ENCODE measurements at regions of chr4 and their contacts with region 1.

Region 1: DNA sequence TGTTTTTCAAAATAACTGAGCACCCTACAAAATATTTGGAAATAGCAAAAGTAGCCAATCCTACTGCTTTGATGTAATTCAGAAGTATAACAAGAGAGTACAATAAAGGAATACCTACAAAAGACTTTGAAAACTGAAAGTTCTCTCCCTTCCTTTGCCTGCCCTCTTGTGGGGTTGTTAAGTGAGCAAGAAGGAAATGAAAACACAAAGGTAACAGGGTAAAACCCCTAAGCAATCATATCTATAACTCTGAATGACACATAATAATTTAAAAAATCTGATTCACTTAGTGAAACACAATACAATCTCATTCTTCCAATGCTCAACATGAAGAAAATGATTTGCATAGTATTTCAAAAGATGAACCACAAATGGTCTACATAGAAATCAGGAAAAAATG is 98.2 kb downstream of the FRYL start:
- DNase-seq: no peak
- H3K4me3 Mint-ChIP-seq: no peak overlapping the region
- H3K27ac Mint-ChIP-seq: peak overlapping the region; percentile 66
- H3K4me1 Mint-ChIP-seq: peaks cover 36% of the 10 kb centered on the region
- H3K27me3 Mint-ChIP-seq: no peaks in the 10 kb centered on the region

Region 2: DNA sequence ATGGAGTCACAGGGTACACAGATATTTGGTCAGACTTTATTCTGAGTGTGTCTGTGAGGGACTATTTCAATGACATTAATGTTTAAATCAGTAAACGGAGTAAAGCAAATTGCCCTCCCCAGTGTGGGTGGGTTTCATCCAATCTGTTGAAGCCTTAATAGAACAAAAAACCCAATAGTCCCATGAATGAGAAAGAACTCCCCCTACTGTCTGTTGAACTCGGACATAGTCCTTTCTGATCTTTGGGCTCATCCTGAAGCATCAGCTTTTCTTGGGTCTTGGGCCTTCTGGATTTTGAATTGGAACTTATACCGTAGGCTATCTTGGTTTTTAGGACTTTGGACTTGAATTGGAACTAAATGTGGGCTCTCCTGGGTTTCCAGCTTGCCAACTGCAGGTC is 1966.4 kb before region 1 on chr4:
- intact Hi-C with region 1: no loop called
- DNase-seq: no peak
- H3K4me3 Mint-ChIP-seq: no peak overlapping the region
- H3K27ac Mint-ChIP-seq: no peak overlapping the region
- H3K4me1 Mint-ChIP-seq: no peaks in the 10 kb centered on the region
- H3K27me3 Mint-ChIP-seq: no peaks in the 10 kb centered on the region

Region 3: GRCh38 chr4:47891928-47892327 is 789.9 kb before region 1 on chr4:
- intact Hi-C with region 1: no loop called
- DNase-seq: no peak
- H3K4me3 Mint-ChIP-seq: no peak overlapping the region
- H3K27ac Mint-ChIP-seq: peak overlapping the region; percentile 42
- H3K4me1 Mint-ChIP-seq: peaks cover 6% of the 10 kb centered on the region
- H3K27me3 Mint-ChIP-seq: no peaks in the 10 kb centered on the region

Region 4: DNA sequence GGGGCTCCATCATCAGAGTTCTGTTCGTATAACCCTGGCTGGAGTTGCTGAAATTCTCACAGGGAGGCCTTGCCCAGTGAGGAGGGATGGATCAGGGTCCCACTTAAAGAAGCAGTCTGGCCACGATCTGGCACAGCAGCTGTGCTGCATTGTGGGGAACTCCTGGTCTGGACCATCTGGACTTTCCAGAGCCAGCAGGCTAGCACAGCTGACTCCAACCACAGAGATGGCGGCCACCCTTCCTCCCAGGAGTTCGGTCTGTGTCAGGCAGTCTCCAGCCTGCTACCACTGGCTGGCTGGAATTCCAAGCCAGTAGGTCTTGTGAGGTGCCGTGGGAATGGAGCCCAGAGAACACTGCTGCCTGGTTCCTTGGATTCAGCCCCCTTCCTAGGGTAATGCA is 278.5 kb before region 1 on chr4:
- intact Hi-C with region 1: no loop called
- DNase-seq: no peak
- H3K4me3 Mint-ChIP-seq: no peak overlapping the region
- H3K27ac Mint-ChIP-seq: no peak overlapping the region
- H3K4me1 Mint-ChIP-seq: peaks cover 18% of the 10 kb centered on the region
- H3K27me3 Mint-ChIP-seq: no peaks in the 10 kb centered on the region

Region 5: DNA sequence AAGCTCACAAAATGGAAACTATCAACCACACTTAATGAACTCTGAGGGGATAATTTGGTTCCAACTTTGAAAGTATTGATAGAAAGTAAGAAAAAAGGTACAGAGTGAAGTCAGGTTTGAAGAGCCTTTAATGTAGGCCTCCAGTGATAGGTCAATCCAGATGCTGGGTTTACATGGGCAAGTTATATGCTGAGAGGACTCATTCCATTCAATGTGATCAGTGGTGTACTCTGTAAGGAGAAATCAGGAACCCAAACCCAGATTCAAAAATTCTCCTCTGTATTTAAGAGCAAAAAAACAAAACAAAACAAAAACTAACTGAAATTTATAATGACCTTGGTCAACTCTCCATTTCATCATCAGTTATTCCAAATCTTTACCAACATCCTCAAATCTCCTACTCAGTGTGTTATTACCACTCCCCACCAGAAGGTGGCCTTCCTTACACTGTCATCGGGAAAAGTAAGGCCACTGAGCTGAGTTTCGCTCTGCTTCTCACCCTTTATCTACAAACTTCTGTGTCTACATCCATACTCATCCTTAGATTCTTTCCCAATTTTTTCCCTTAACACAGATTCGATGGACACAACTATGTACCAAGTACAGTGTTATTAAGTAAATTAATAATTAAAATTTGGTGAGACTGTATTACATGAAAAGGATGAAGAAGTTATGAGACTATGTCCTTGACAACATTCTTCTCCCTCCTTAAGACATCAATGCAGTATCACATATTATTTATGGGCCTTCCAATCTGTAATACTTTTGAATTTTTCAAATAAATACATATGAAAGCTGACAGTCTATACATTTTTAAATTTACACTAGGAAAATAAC is 103.5 kb before region 1 on chr4:
- intact Hi-C with region 1: loop called (anchors 1 kb)
- DNase-seq: peak; percentile 17
- H3K4me3 Mint-ChIP-seq: no peak overlapping the region
- H3K27ac Mint-ChIP-seq: peak overlapping the region; percentile 6
- H3K4me1 Mint-ChIP-seq: peaks cover 10% of the 10 kb centered on the region
- H3K27me3 Mint-ChIP-seq: no peaks in the 10 kb centered on the region

Region 6: DNA sequence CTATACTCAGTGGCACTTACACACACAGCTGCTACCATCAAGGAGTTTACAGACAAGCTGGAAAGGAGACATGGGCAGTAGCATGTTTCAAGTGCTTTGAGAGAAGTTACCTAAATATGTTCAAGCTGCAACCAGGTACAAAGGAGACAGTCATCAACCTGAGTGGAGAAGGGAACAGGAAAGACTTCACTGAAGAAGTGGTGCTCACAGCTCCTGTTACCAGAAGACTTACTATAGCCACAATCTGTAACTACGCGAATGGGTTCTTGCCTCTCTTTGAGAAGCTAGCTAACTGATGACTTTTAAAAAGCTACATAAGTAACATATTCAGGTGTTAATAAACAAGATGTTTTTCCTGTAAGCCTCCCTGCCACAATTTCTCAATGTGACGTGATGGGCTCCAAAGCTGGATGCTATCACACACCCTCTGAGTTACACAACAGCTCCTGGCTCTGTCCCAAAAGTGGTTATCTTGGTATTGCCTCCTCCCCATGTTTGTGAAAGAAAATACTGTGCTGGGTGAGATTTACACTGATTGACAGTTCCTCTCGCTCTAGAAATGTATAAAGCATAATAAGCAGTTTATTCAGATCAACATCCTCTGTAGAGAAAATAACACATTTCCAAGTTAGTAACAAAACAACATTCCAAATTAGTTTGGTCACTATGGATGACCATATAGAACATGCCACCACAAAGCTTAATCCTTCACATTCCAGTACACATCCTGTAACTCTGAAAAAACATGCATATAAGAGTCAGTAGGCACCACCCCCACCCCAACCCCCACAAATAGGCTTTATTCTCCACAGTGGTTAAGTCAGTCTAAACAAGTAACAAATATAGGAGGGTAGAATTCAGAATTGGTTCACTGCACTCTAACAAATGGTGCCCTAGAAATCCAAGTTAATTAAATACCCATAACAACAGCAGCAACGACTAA is 16.4 kb after region 1 on chr4:
- intact Hi-C with region 1: loop called (anchors 1 kb)
- DNase-seq: no peak
- H3K4me3 Mint-ChIP-seq: no peak overlapping the region
- H3K27ac Mint-ChIP-seq: no peak overlapping the region
- H3K4me1 Mint-ChIP-seq: peaks cover 33% of the 10 kb centered on the region
- H3K27me3 Mint-ChIP-seq: no peaks in the 10 kb centered on the region

Region 7: GRCh38 chr4:48739560-48740019 is 57.7 kb after region 1 on chr4:
- intact Hi-C with region 1: loop called (anchors 5 kb)
- DNase-seq: no peak
- H3K4me3 Mint-ChIP-seq: no peak overlapping the region
- H3K27ac Mint-ChIP-seq: no peak overlapping the region
- H3K4me1 Mint-ChIP-seq: peaks cover 48% of the 10 kb centered on the region
- H3K27me3 Mint-ChIP-seq: no peaks in the 10 kb centered on the region

Region 8: GRCh38 chr4:48963042-48963679 is 281.3 kb after region 1 on chr4:
- intact Hi-C with region 1: loop called (anchors 1 kb)
- DNase-seq: peak; percentile 54
- H3K4me3 Mint-ChIP-seq: no peak overlapping the region
- H3K27ac Mint-ChIP-seq: no peak overlapping the region
- H3K4me1 Mint-ChIP-seq: no peaks in the 10 kb centered on the region
- H3K27me3 Mint-ChIP-seq: peaks cover 4% of the 10 kb centered on the region

Measured in activated T-helper 1 cell treated with anti-CD3 and anti-CD28 coated beads, Interleukin-12 subunit alpha, Interleukin-12 subunit beta, Interleukin-2, Interleukin-4 antibody, amounts not matched to agents 30 ng/mL and 10 ng/mL and 1 ng/mL, durations not matched to agents 14 hours and 24 hours and 36 hours (primary cell).